ENCODE measurements at regions of chr7 and their contacts with region 1.

Region 1: DNA sequence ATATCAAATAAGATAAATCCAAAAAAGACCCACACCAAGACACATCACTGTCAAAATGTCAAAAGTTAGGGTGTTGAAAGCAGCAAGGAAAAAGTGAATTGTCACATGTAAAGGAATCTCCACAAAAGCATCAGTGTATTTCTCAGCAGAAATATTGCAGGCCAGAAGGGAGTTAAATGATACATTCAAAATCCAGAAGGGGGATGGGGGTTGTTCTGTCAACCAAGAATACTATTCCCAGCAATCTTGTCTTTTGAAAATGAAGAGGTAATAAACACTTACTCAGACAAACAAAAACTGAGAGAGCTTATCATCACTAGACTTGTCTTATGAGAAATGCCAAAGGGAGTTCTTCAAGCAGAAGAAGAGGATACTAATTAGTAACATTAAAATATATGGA is 191.1 kb upstream of the NOBOX start:
- DNase-seq: no peak
- H3K4me3 ChIP-seq: no peak overlapping the region
- H3K27ac ChIP-seq: no peak overlapping the region
- H3K4me1 ChIP-seq: no peaks in the 10 kb centered on the region
- H3K27me3 ChIP-seq: no peaks in the 10 kb centered on the region
- CTCF ChIP-seq: no peak

Region 2: GRCh38 chr7:144011458-144012230 is 582.9 kb before region 1 on chr7:
- CTCF ChIA-PET with region 1: no interaction called
- dilution Hi-C with region 1: no loop called
- in situ Hi-C with region 1: no loop called
- intact Hi-C with region 1: no loop called
- DNase-seq: peak; percentile 10
- H3K4me3 ChIP-seq: no peak overlapping the region
- H3K27ac ChIP-seq: no peak overlapping the region
- H3K4me1 ChIP-seq: no peaks in the 10 kb centered on the region
- H3K27me3 ChIP-seq: no peaks in the 10 kb centered on the region
- CTCF ChIP-seq: peak; percentile 30 to 47

Region 3: GRCh38 chr7:144529269-144529926 is 65.2 kb before region 1 on chr7:
- CTCF ChIA-PET with region 1: no interaction called
- dilution Hi-C with region 1: loop called (anchors 5 kb)
- in situ Hi-C with region 1: no loop called
- intact Hi-C with region 1: no loop called
- DNase-seq: no peak
- H3K4me3 ChIP-seq: no peak overlapping the region
- H3K27ac ChIP-seq: no peak overlapping the region
- H3K4me1 ChIP-seq: no peaks in the 10 kb centered on the region
- H3K27me3 ChIP-seq: no peaks in the 10 kb centered on the region
- CTCF ChIP-seq: no peak